Psoas muscle (tissue), 8 donors: ENCODE measurements at regions of chr2 and their contacts with region 1.

Region 1: GRCh38 chr2:42223855-42224268 is 54.7 kb downstream of the EML4 start:
- DNase-seq: no peak
- ATAC-seq: no peak
- H3K4me3 ChIP-seq: no peak overlapping the region
- H3K27ac ChIP-seq: no peak overlapping the region
- H3K4me1 ChIP-seq: peaks cover 3% of the 10 kb centered on the region
- H3K27me3 ChIP-seq: no peaks in the 10 kb centered on the region
- CTCF ChIP-seq: no peak

Region 2: DNA sequence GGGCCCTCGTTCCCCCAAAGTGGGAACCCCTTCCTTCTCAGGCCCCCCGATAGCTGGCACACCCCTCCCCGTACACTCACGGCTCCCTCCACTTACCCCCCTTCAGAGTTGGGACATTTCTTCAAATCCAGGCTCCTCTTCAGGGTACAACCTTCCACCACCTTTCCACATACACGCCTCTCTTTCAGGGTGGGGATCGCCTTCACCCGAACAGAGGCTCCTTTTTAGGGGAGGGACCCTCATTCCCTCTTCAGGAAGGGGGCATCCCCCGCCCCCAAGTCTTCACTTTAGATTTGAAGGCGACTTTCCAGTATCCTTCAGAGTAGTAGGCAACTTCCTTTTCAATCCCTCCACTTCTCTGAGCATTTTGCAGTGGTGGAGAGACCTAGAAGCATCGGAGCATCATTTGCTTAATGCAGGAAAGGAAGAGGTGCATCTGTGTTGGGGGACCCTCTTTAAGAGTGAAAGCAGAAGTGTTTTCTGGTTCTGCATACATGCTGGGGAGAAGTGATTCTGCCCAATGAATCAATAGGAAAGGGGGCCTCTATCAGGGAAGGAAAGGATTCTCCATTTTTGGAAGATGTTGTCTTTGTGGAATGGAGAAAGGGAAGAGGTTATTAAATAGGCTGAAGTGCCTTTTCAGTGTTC is 53.9 kb before region 1 on chr2:
- intact Hi-C with region 1: loop called in 1 of 2 experiments (anchors 5 kb)
- DNase-seq: no peak
- ATAC-seq: peak in 2 of 4 donors; percentile 5 to 27
- H3K4me3 ChIP-seq: peak overlapping the region; percentile 94
- H3K27ac ChIP-seq: peak overlapping the region; percentile 86
- H3K4me1 ChIP-seq: peaks cover 22% of the 10 kb centered on the region
- H3K27me3 ChIP-seq: no peaks in the 10 kb centered on the region
- CTCF ChIP-seq: no peak

Region 3: GRCh38 chr2:42238644-42239288 is 14.9 kb after region 1 on chr2:
- intact Hi-C with region 1: no loop called
- DNase-seq: no peak
- ATAC-seq: peak; percentile 62 to 88 (median 84)
- H3K4me3 ChIP-seq: no peak overlapping the region
- H3K27ac ChIP-seq: no peak overlapping the region
- H3K4me1 ChIP-seq: no peaks in the 10 kb centered on the region
- H3K27me3 ChIP-seq: no peaks in the 10 kb centered on the region
- CTCF ChIP-seq: peak; percentile 46